ENCODE measurements at regions of chr13 and their contacts with region 1.

Region 1: GRCh38 chr13:98998831-98999638 is 21.2 kb upstream of the DOCK9 start:
- DNase-seq: peak; percentile 66
- H3K4me3 Mint-ChIP-seq: no peak overlapping the region
- H3K27ac Mint-ChIP-seq: peak overlapping the region; percentile 67
- H3K4me1 Mint-ChIP-seq: peaks cover 92% of the 10 kb centered on the region
- H3K27me3 Mint-ChIP-seq: no peaks in the 10 kb centered on the region

Region 2: DNA sequence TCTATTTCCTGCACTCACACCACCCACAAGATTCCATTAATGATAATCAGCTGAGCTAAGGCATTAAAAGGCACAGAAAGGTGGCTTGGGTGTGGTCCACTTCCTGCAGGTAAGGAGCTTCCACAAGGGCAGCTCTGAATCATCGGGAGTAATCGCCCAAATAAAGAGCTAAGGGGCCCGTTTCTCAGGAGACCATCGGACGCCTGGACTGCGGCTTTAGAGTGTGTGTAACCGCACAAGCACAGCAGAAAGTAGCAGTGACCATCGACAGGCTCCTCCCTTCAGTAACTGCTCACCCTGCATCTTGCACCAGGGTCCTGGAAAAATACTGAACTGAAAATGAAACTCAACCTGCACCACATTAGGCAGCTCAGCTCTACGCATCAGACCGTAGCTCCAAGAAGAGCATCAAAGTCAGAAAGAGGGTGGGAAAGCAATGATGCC is 428.1 kb before region 1 on chr13:
- CTCF ChIA-PET with region 1: no interaction called
- intact Hi-C with region 1: loop called (anchors 5 kb)
- DNase-seq: peak; percentile 62
- H3K4me3 Mint-ChIP-seq: peak overlapping the region; percentile 76
- H3K27ac Mint-ChIP-seq: peak overlapping the region; percentile 80
- H3K4me1 Mint-ChIP-seq: peaks cover 86% of the 10 kb centered on the region
- H3K27me3 Mint-ChIP-seq: no peaks in the 10 kb centered on the region

Region 3: GRCh38 chr13:98918771-98919170 is 80.3 kb before region 1 on chr13:
- CTCF ChIA-PET with region 1: no interaction called
- intact Hi-C with region 1: loop called (anchors 2 kb)
- DNase-seq: peak; percentile 49
- H3K4me3 Mint-ChIP-seq: no peak overlapping the region
- H3K27ac Mint-ChIP-seq: peak overlapping the region; percentile 57
- H3K4me1 Mint-ChIP-seq: peaks cover 49% of the 10 kb centered on the region
- H3K27me3 Mint-ChIP-seq: no peaks in the 10 kb centered on the region

Region 4: DNA sequence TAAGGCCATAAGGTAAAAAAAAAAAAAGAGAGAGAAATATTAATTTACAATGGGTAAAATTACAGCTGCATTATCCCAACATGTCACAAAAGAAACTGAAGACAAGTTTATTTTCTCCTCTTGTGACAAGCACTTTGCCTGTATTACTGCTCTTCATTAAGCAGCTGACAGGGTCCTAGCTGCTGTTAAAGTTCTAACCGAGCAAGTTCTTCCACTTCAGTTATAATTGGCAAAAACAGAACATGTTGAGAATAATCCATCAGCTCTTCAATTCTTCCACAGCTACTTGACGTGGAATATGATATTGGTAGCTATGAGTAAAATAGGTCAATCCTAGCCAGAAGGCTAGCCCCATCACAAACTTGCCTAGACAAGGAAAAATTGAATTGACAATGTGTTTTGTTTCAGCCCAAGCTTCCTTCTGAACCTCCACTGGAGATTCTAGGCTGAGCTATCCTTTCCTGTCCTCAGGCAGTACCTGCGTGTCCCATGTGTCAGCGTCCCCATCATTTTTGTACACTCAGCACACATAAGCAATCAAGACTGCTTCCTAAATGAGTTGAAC is 11.0 kb after region 1 on chr13:
- CTCF ChIA-PET with region 1: interaction called, 3 read pairs
- intact Hi-C with region 1: loop called (anchors 1 kb)
- DNase-seq: no peak
- H3K4me3 Mint-ChIP-seq: no peak overlapping the region
- H3K27ac Mint-ChIP-seq: no peak overlapping the region
- H3K4me1 Mint-ChIP-seq: peaks cover 32% of the 10 kb centered on the region
- H3K27me3 Mint-ChIP-seq: no peaks in the 10 kb centered on the region

Region 5: GRCh38 chr13:99018418-99019180 is 19.6 kb after region 1 on chr13:
- CTCF ChIA-PET with region 1: interaction called, 3 read pairs
- intact Hi-C with region 1: loop called (anchors 1 kb)
- DNase-seq: no peak
- H3K4me3 Mint-ChIP-seq: no peak overlapping the region
- H3K27ac Mint-ChIP-seq: peak overlapping the region; percentile 75
- H3K4me1 Mint-ChIP-seq: peaks cover 68% of the 10 kb centered on the region
- H3K27me3 Mint-ChIP-seq: no peaks in the 10 kb centered on the region

Region 6: DNA sequence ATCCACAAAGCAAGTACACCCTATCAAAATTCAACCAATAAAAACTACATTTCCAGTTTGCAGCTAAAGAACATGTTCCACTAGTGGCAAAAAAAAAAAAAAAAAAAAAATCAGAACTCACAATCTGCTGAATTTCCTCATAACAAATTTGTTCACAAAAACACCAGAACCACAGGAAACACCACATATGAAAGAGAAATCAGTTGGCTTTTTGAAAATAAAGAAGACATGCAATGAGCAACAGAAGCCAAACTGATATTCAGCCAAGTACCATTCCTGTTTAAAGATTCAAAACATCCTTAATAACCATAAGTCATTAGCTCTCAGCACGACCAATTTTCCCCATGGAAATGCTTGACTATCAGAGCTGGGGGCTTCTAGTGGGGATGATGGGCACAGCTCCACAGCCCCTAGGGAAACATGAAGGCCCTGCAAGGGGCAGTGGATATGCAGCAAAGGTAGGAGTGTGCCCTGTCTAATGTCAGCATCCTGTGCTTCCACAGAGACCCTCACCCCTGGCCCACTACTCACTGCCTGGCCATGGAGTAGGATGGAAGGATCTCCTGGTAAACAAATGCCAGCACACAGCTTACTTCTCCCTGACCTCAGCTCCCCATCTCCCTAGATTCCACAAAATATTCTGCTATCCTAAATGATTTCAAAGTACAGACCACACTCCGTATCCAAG is 52.9 kb after region 1 on chr13:
- CTCF ChIA-PET with region 1: no interaction called
- intact Hi-C with region 1: loop called (anchors 2 kb)
- DNase-seq: no peak
- H3K4me3 Mint-ChIP-seq: peak overlapping the region; percentile 33
- H3K27ac Mint-ChIP-seq: peak overlapping the region; percentile 77
- H3K4me1 Mint-ChIP-seq: peaks cover 80% of the 10 kb centered on the region
- H3K27me3 Mint-ChIP-seq: no peaks in the 10 kb centered on the region

Region 7: DNA sequence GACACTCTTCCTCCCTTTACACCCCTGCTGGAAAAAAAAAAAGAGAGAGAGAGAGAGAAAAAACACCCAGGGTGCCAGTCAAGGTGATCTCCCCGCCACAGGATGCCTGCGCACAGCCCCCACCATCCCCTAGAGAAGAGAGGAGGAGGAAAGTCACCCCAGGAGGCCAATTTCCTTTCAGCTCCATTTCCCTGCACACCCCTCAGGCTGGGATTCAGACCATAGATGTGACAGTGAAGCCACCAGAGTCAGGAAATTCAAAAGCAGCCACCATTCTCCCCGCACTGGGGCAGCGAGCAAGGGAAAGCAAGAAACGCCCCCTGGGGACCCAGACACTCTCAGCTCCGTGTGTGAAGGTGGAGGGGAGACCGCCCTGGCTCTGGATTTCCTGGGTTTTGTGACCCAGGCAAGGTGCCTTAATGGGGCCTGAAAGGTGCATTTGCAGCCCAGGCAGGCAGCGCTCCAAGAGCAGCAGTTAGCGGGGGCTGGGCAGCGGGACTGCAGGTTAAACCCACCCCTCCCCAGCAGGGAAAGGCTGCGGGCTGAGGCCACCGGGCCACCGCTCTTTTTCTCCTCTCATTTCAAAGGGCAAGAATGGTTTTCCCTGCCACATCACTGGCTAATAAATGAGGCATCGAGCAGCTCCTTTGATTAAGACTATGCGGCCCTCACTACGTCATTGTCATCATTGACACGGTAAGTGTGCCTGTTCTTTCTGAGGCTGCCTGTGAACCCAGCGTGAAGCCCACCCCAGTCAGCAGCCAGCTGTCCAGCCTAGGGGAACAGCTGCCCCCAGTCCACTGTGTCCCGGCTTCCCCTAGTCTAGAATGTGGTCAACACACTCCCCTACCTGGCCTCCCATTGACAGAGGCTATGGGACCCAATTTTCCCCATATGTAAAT is 418.4 kb after region 1 on chr13:
- CTCF ChIA-PET with region 1: no interaction called
- intact Hi-C with region 1: loop called (anchors 5 kb)
- DNase-seq: peak; percentile 71
- H3K4me3 Mint-ChIP-seq: no peak overlapping the region
- H3K27ac Mint-ChIP-seq: no peak overlapping the region
- H3K4me1 Mint-ChIP-seq: peaks cover 64% of the 10 kb centered on the region
- H3K27me3 Mint-ChIP-seq: peaks cover 2% of the 10 kb centered on the region